ENCODE measurements at regions of chr17 and their contacts with region 1.

Region 1: DNA sequence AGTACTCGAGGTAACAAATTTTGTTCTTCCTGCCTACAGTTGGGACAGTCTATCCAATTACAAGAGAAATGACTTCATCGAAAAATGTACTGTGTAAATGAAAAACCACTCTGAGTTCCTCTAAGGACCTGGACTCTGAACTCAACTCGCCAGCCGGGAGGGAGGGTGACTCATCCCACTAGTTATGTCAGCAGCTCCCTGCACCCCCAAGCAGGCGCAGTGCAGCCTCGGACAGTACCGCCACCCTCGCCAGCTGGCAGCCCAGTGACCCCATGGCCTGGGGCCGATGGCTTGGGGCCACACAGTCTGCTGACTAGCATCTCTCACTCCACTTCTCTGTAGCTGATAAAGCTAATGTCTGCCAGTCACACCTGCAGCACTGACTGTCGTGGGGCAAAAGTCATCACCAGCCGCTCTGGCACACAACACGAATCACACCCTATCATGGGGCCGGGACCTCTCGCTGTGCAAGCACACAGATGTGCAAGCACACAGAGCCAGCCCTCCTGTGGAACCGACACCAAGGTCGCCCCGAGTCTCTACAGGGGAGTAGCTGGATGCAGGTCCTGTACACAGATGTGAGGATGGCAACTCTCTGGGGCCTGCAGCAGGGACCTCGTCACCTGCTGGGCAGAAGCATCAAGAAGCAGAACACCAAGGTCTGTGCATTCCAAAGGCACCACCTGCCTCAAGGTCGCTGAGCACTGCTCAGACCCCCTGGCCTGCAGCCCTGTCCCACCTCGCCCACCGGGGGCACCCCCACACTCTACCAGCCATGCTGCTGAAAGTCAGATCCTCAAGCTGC is 5.7 kb downstream of the CSNK1D start:
- H3K4me3 Mint-ChIP-seq: peak overlapping the region; percentile 45
- H3K27ac Mint-ChIP-seq: peak overlapping the region; percentile 72
- H3K4me1 Mint-ChIP-seq: peaks cover 70% of the 10 kb centered on the region
- H3K27me3 Mint-ChIP-seq: no peaks in the 10 kb centered on the region

Region 2: DNA sequence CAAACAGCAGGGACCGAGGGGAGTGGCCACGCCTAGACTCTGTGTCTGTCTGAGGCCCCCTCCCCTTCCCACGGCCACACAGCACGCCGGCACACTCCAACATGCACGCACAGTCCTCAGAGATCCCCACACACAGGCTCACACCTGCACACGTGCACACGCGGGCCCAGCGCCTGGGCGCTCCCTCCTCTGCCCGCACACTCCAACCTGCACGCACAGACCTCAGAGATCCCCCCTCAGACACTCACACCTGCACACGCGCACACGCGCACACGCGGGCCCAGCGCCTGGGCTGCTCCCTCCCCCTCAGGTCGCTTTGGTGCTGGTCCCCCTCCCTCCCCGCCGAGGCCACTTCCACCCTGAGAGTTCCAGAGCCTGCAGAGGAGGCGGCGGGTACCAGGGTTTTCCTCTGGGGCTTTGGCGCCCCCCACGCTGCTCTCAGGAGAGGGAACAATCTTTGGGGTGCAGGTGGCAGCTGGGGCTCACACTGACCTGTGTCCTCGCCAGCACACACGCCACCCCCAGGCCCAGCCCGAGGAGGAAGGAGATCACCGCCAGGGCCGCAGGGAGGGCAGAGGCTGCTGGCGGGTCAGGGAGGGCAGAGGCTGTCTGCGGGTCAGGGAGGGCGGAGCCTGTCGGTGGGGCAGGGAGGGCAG is 48.1 kb after region 1 on chr17:
- intact Hi-C with region 1: loop called (anchors 10 kb)
- H3K4me3 Mint-ChIP-seq: peak overlapping the region; percentile 60
- H3K27ac Mint-ChIP-seq: no peak overlapping the region
- H3K4me1 Mint-ChIP-seq: peaks cover 27% of the 10 kb centered on the region
- H3K27me3 Mint-ChIP-seq: peaks cover 43% of the 10 kb centered on the region